AG04450 (cell line): ENCODE measurements at regions of chr16 and their contacts with region 1.

Region 1: DNA sequence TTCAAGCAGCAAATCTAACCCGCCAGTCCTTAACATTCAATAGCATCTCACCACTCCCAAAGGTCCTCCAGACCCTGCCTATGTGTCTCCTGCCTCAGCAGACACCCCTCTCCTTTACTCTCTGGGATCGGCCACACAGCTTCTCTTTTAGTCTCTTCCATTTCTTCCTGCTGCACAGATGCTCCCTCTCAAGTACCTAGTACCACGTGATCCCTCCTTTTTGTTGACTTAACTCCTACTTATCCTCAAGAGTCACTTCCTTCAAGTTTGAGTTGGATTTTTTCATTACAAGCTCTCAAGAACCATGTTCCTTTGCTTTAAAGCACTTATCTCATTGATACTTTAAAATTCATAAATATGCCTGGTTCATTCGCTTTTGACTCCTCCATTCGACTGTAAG is 24.9 kb downstream of the AMFR start:
- DNase-seq: no peak
- H3K4me3 ChIP-seq: no peak overlapping the region
- H3K27ac ChIP-seq: no peak overlapping the region
- H3K27me3 ChIP-seq: no peaks in the 10 kb centered on the region
- CTCF ChIP-seq: no peak

Region 2: GRCh38 chr16:56286809-56287208 is 113.6 kb before region 1 on chr16:
- CTCF ChIA-PET with region 1: no interaction called
- POLR2A ChIA-PET with region 1: no interaction called
- DNase-seq: no peak
- H3K4me3 ChIP-seq: no peak overlapping the region
- H3K27ac ChIP-seq: no peak overlapping the region
- H3K27me3 ChIP-seq: peaks cover 5% of the 10 kb centered on the region
- CTCF ChIP-seq: no peak

Region 3: DNA sequence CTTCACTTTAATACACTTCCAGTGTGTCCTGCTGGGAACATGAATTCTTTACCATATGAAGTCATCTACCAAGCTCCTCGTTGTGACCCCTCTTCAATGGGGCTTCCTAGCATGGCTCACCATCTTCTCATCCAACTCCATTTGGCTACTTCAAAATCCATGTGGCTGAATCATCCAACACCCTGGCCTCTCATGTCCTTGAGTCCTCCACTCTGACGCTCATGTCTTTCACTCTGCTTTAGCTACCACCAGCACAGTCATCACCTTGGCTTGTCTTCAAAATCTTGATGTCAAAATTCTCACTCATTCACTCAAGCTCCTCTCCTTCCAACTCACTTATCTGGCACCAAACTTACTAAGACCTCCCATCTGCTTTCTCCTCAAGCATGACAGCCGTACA is 10.9 kb before region 1 on chr16:
- CTCF ChIA-PET with region 1: no interaction called
- POLR2A ChIA-PET with region 1: no interaction called
- DNase-seq: peak; percentile 83
- H3K4me3 ChIP-seq: no peak overlapping the region
- H3K27ac ChIP-seq: peak overlapping the region; percentile 83
- H3K27me3 ChIP-seq: no peaks in the 10 kb centered on the region
- CTCF ChIP-seq: no peak

Region 4: GRCh38 chr16:56436258-56436657 is 35.8 kb after region 1 on chr16:
- CTCF ChIA-PET with region 1: no interaction called
- POLR2A ChIA-PET with region 1: no interaction called
- DNase-seq: no peak
- H3K4me3 ChIP-seq: no peak overlapping the region
- H3K27ac ChIP-seq: no peak overlapping the region
- H3K27me3 ChIP-seq: no peaks in the 10 kb centered on the region
- CTCF ChIP-seq: no peak

Region 5: DNA sequence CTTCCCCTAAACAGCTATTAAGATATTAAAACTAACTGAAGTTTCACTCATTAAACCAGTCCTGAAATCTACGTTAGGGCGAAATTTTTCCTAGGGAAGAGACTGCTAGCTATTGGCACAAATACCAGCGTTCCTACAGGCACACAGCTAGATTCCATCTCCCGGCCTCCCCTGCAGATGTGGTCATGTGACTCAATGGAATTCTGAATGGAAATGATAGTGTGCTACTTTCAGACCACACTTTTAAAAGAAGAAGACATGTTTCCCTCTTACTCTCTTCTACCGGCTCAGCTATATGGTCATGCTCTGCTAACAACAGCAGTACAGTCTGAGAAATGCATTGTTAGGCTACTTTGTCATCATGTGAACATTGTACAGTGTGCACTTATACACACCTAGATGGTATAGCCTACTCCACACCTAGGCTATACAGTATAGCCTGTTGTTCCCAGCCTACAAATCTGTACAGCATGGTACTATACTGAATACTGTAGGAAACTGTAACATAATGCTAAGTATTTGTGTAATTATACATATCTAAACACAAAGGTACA is 82.3 kb after region 1 on chr16:
- CTCF ChIA-PET with region 1: interaction called, 11 read pairs
- POLR2A ChIA-PET with region 1: no interaction called
- DNase-seq: no peak
- H3K4me3 ChIP-seq: no peak overlapping the region
- H3K27ac ChIP-seq: no peak overlapping the region
- H3K27me3 ChIP-seq: no peaks in the 10 kb centered on the region
- CTCF ChIP-seq: no peak